ENCODE measurements at regions of chr2 and their contacts with region 1.

Region 1: GRCh38 chr2:69436938-69437750 is at the start of gene NFU1:
- DNase-seq: peak; percentile 86 to 93
- ATAC-seq: peak; percentile 85 to 89
- H3K4me3 ChIP-seq: peak within 1 kb of the TSS; percentile 67 to 95 (median 88)
- H3K27ac ChIP-seq: peak within 1 kb of the TSS; percentile 91 to 97 (median 96)
- H3K4me1 ChIP-seq: peaks cover 0 to 14% of the 10 kb centered on the region in 2 donors
- H3K27me3 ChIP-seq: no peaks in the 10 kb centered on the region
- CTCF ChIP-seq: peak; percentile 78 to 81 (median 80)
- POLR2A ChIP-seq: peak; percentile 63 to 84
- total RNA-seq, gene NFU1: 41.4 to 73.1 (median 68.1) TPM

Region 2: GRCh38 chr2:69122271-69122670 is 314.9 kb before region 1 on chr2:
- in situ Hi-C with region 1: no loop called
- intact Hi-C with region 1: no loop called
- DNase-seq: no peak
- ATAC-seq: no peak
- H3K4me3 ChIP-seq: no peak overlapping the region
- H3K27ac ChIP-seq: no peak overlapping the region
- H3K4me1 ChIP-seq: no peaks in the 10 kb centered on the region
- H3K27me3 ChIP-seq: no peaks in the 10 kb centered on the region
- CTCF ChIP-seq: no peak
- POLR2A ChIP-seq: no peak

Region 3: GRCh38 chr2:69164061-69164778 is 272.9 kb before region 1 on chr2:
- in situ Hi-C with region 1: no loop called
- intact Hi-C with region 1: no loop called
- DNase-seq: no peak
- ATAC-seq: no peak
- H3K4me3 ChIP-seq: no peak overlapping the region
- H3K27ac ChIP-seq: no peak overlapping the region
- H3K4me1 ChIP-seq: peaks cover 0 to 14% of the 10 kb centered on the region in 2 donors
- H3K27me3 ChIP-seq: no peaks in the 10 kb centered on the region
- CTCF ChIP-seq: no peak
- POLR2A ChIP-seq: no peak

Region 4: DNA sequence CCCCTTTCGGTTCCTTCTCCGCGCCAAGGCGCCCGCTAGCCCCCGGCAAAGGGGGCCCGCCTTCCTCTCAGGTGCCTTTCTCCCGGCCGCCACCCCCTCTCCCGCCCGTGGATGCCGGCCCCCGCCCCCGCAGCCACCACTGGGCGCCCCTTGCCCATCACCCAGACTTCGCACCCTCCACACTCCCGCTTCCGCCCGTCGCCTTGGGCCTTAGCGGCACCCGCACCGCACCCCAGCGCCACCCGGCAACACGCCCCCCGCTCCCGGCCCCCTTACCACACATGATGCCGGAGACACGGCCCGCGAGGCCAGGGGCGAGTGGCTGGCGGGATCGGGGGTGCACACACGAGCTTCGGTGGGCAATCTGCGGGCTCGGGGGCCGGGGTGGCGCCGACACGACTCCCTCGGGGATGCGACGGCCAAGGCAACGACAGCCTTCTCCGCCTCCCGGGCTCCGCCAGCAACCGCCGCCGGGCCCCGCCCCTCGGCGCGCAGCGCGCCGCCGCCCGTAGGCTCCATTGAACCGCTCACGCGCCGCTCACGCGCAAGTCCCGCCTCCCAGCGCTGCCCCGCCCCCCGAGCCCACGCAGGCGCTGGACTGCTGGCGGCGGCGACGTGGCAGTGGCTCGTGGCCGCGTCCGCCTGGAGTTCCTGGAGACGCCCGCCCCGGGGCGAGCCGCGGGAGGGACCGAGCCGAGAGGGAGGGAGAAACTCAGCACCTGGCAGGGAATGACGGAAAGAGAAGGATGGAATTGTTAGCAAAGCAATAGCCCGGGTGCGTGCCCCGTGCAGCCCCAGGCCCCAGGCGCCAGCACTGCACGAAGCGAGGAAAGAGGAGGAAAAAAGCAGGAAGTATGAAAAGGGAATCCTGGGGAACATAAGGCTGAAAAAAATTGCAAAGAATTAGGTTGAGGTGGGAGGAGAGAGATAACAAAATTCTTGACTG is 50.1 kb before region 1 on chr2 and contains the start of gene GFPT1:
- in situ Hi-C with region 1: no loop called
- intact Hi-C with region 1: loop called (anchors 1 kb)
- DNase-seq: peak; percentile 86 to 91
- ATAC-seq: peak; percentile 93 to 95
- H3K4me3 ChIP-seq: peak within 1 kb of the TSS; percentile 77 to 93 (median 81)
- H3K27ac ChIP-seq: peak within 1 kb of the TSS; percentile 80 to 83 (median 82)
- H3K4me1 ChIP-seq: peaks cover 18 to 21% of the 10 kb centered on the region in 2 donors
- H3K27me3 ChIP-seq: no peaks in the 10 kb centered on the region
- CTCF ChIP-seq: no peak
- POLR2A ChIP-seq: peak; percentile 71 to 79
- total RNA-seq, gene GFPT1: 12.2 to 31.4 (median 14.8) TPM